PC-3 (cell line): ENCODE measurements at regions of chr4 and their contacts with region 1.

Region 1: DNA sequence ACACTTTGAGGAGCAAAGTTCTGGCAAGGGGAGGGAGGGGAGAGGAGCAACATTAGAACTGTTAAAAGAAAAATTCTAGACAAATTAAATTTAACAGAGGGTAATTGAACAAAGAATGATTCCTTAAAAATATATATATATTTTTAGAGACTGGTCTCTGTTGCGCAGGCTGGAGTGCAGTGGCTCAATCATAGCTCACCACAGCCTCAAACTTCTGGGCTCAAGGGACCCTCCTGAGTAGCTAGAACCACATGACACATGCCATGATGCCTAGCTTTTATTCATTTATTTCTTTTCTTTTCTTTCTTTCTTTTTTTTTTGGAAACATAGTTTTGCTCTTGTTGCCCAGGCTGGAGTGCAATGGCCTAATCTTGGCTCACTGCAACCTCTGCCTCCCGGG is 19.1 kb upstream of the SPINK2 start:
- DNase-seq: no peak
- ATAC-seq: no peak
- H3K4me3 ChIP-seq: no peak overlapping the region
- H3K27ac ChIP-seq: no peak overlapping the region
- H3K4me1 ChIP-seq: no peaks in the 10 kb centered on the region
- H3K27me3 ChIP-seq: no peaks in the 10 kb centered on the region
- CTCF ChIP-seq: no peak

Region 2: GRCh38 chr4:56424697-56425514 is 415.7 kb before region 1 on chr4:
- CTCF ChIA-PET with region 1: no interaction called
- POLR2A ChIA-PET with region 1: no interaction called
- intact Hi-C with region 1: loop called (anchors 1 kb)
- DNase-seq: peak; percentile 61
- ATAC-seq: peak; percentile 59
- H3K4me3 ChIP-seq: no peak overlapping the region
- H3K27ac ChIP-seq: no peak overlapping the region
- H3K4me1 ChIP-seq: no peaks in the 10 kb centered on the region
- H3K27me3 ChIP-seq: no peaks in the 10 kb centered on the region
- CTCF ChIP-seq: peak; percentile 93

Region 3: DNA sequence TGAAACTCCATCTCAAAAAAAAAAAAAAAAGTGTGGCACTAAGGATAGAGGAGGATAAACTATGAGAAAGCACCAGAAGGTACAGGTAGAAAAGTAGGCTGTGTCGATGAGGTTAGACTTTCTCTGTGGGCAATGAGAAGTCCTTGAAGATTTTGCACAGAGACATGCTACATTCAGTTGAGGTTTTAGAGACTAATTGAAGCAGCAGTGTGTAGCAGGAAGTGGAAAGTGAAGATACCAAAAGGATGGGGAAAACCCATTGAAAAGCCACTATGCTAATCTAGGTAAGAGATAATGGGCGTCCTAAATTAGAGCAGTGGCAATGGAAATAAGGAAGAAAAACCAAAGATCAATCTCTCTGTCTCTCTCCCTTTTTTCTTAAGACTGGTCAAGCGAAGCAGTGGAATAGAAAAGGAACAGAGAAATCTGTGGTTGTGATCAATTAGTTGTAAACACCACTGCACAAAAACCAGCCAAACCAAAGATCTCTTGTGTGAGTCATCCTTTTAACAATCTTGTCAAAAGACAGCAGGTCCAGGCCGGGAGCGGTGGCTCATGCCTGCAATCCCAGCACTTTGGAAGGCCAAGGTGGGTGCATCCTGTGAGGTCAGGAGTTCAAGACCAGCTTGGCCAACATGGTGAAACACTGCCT is 22.6 kb before region 1 on chr4:
- CTCF ChIA-PET with region 1: interaction called, 5 read pairs
- POLR2A ChIA-PET with region 1: interaction called, 27 read pairs
- intact Hi-C with region 1: no loop called
- DNase-seq: peak; percentile 71
- ATAC-seq: peak; percentile 43; the same call in 1 of the 2 replicates
- H3K4me3 ChIP-seq: no peak overlapping the region
- H3K27ac ChIP-seq: no peak overlapping the region
- H3K4me1 ChIP-seq: 0 out of 2 replicates have a peak, but pooled peaks cover 3% of the 10 kb centered on the region
- H3K27me3 ChIP-seq: no peaks in the 10 kb centered on the region
- CTCF ChIP-seq: no peak

Region 4: DNA sequence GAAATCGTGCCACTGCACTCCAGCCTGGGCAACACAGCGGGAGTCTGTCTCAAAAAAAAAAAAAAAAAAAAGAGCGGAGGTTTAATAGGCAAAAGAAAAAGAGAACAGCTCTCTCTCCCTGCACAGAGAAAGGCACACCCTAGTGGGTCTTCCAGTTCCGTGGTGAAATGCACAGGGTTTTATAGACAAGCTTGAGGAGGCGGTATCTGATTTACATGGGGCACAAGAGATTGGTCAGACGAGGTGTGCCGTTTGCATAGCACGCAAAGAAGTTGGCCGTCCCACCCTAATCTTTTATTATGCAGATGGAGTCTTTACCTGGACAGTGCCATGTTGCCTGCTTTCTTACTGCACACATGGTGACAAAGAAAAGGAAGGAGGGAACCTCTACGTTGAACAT is 33.6 kb after region 1 on chr4:
- CTCF ChIA-PET with region 1: no interaction called
- POLR2A ChIA-PET with region 1: no interaction called
- intact Hi-C with region 1: no loop called
- DNase-seq: peak; percentile 55
- ATAC-seq: peak; percentile 15; the same call in 1 of the 2 replicates
- H3K4me3 ChIP-seq: peak overlapping the region; percentile 25; the same call in 1 of the 2 replicates
- H3K27ac ChIP-seq: no peak overlapping the region
- H3K4me1 ChIP-seq: no peaks in the 10 kb centered on the region
- H3K27me3 ChIP-seq: no peaks in the 10 kb centered on the region
- CTCF ChIP-seq: no peak